ENCODE measurements at regions of chr5 and their contacts with region 1.

Region 1: GRCh38 chr5:79020861-79021561 is 35.9 kb upstream of the ARSB start:
- DNase-seq: peak; percentile 57
- ATAC-seq: peak; percentile 78

Region 2: DNA sequence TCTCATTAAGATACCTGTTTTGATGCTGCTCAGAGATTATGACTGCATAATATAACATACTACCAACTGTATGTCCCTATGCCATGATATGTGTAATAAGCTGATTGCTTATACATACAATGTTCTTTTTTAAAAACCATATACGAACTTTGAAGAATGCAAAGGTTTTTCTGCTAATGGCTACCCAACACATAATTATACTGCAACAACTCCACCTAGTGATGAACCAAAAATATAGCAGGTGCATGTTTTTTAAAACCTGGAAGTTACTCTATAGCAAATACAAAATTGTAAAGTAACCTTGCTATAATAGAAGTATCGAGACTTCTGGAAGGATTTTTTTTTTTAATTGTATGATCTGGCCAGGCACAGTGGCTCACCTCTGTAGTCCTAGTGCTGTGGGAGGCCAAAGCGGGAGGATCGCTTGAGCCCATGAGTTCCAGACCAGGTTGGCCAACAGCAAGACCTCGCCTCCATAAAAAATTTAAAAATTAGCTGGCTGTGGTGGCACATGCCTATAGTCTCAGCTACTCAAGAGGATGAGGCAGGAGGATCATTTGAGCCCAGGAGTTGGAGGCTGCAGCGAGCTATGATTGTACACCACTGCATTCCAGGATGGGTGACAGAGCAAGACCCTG is 443.8 kb after region 1 on chr5:
- intact Hi-C with region 1: loop called (anchors 10 kb)
- DNase-seq: no peak
- ATAC-seq: peak; percentile 60